B cell (primary cell): ENCODE measurements at regions of chr2 and their contacts with region 1.

Region 1: DNA sequence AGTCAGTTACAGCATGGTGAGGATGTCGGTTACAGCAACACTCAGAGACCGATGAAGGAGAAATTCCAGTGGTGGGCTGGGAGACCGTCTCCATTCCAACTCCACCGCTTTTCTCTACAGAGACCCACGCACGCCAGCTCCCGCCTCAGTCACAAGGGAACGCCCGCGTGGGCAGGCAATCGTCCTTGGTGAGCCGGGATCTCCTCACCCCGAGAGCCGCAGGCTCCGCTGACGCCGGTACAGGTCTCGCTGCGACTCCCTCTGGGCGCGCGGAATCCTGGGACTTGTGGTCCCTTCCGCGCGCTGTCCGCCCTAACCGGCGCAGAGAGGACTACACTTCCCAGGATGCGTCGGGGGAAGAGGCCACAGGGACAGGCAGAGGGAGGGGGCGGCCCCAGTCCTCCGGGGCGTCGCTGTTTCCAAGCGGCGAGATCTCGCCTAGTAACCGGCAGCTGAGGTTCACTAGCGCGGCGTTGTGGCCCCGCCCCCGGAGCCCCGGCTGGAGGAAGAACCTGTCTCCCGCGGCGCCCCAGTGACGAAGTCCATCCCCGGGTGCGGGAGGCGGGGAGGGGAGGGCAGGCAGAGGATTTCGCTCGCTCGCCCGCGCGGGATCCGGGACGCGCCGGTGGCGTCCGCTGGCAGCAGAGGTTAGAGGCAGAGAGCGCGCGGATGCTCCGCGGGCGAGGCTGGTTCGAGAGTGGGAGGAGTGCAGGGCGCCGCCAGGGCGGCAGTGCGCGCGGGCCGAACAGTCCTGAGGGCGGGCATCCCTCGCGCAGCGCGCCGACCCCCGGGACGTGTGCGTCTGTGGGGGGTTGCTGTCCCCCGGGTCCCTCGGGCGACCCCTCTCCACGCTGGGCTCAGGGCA is at the start of gene EML6:
- DNase-seq: peak; percentile 99
- ATAC-seq: peak; percentile 95
- H3K4me3 ChIP-seq: peak within 1 kb of the TSS; percentile 51 to 98 (median 79)
- H3K4me3 Mint-ChIP-seq: peak within 1 kb of the TSS; percentile 100
- H3K27ac ChIP-seq: peak within 1 kb of the TSS in 1 of 2 donors; percentile 59
- H3K27ac Mint-ChIP-seq: peak within 1 kb of the TSS; percentile 94
- H3K4me1 ChIP-seq: peaks cover 15 to 17% of the 10 kb centered on the region in 2 donors
- H3K4me1 Mint-ChIP-seq: peaks cover 37% of the 10 kb centered on the region
- H3K27me3 ChIP-seq: peaks cover 0 to 27% (median 8%) of the 10 kb centered on the region in 4 experiments
- H3K27me3 Mint-ChIP-seq: peaks cover 13% of the 10 kb centered on the region
- CTCF ChIP-seq: peak; percentile 50
- total RNA-seq, gene EML6: 47.2 and 53.7 TPM in 2 replicates

Region 2: GRCh38 chr2:53970724-53971602 is 752.4 kb before region 1 on chr2 and contains the start of gene PSME4:
- CTCF ChIA-PET with region 1: no interaction called
- POLR2A ChIA-PET with region 1: no interaction called
- intact Hi-C with region 1: loop called (anchors 1 kb)
- DNase-seq: peak; percentile 93
- ATAC-seq: peak; percentile 89
- H3K4me3 ChIP-seq: peak within 1 kb of the TSS; percentile 71 to 98 (median 95)
- H3K4me3 Mint-ChIP-seq: peak within 1 kb of the TSS; percentile 94
- H3K27ac ChIP-seq: peak within 1 kb of the TSS; percentile 71 to 89
- H3K27ac Mint-ChIP-seq: peak within 1 kb of the TSS; percentile 91
- H3K4me1 ChIP-seq: peaks cover 31 to 33% of the 10 kb centered on the region in 2 donors
- H3K4me1 Mint-ChIP-seq: peaks cover 47% of the 10 kb centered on the region
- H3K27me3 ChIP-seq: no peaks in the 10 kb centered on the region
- H3K27me3 Mint-ChIP-seq: no peaks in the 10 kb centered on the region
- CTCF ChIP-seq: no peak
- total RNA-seq, gene PSME4: 59.9 and 61.9 TPM in 2 replicates

Region 3: DNA sequence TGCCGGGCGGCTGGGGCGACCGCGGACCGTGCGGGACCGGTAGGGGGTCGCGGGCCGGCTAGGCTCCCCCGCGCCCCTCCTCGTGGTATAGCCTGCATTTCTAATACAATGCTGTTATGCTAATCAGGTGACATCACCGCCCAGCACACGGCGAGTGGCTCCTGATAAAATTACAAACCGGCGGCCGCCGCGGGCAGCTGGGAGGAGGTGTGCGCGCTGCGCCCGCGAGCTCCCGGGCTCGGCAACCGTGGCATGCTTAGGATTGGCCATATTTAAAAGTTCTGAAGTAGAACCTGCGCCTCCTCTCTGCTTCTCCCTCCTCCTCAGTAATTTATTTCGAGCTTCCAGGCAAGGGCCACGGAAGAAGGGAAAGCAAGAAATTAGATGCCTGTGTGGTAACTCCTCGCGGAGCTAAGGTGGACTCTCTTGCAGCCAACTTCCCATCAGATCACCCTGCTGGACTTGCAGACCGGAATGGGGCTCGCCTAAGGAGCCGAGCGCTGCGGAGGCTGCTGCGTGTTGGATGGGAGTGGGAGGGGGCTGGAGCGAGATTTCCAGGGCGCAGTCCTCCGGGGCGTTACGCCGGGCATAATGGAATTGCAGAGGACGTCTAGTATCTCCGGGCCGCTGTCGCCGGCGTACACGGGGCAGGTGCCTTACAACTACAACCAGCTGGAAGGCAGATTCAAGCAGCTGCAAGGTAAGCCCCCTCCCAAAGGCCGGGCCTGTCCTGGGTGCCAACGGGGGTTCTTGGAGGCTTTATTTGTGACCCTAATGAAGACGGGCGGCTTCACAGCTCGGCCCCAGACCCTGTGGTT is 165.0 kb before region 1 on chr2:
- CTCF ChIA-PET with region 1: no interaction called
- POLR2A ChIA-PET with region 1: no interaction called
- intact Hi-C with region 1: loop called (anchors 1 kb)
- DNase-seq: peak; percentile 80
- ATAC-seq: peak; percentile 65
- H3K4me3 ChIP-seq: peak overlapping the region; percentile 91 to 99 (median 97)
- H3K4me3 Mint-ChIP-seq: peak overlapping the region; percentile 94
- H3K27ac ChIP-seq: peak overlapping the region; percentile 81 to 92
- H3K27ac Mint-ChIP-seq: peak overlapping the region; percentile 90
- H3K4me1 ChIP-seq: peaks cover 30 to 35% of the 10 kb centered on the region in 2 donors
- H3K4me1 Mint-ChIP-seq: peaks cover 54% of the 10 kb centered on the region
- H3K27me3 ChIP-seq: no peaks in the 10 kb centered on the region
- H3K27me3 Mint-ChIP-seq: no peaks in the 10 kb centered on the region
- CTCF ChIP-seq: no peak

Region 4: DNA sequence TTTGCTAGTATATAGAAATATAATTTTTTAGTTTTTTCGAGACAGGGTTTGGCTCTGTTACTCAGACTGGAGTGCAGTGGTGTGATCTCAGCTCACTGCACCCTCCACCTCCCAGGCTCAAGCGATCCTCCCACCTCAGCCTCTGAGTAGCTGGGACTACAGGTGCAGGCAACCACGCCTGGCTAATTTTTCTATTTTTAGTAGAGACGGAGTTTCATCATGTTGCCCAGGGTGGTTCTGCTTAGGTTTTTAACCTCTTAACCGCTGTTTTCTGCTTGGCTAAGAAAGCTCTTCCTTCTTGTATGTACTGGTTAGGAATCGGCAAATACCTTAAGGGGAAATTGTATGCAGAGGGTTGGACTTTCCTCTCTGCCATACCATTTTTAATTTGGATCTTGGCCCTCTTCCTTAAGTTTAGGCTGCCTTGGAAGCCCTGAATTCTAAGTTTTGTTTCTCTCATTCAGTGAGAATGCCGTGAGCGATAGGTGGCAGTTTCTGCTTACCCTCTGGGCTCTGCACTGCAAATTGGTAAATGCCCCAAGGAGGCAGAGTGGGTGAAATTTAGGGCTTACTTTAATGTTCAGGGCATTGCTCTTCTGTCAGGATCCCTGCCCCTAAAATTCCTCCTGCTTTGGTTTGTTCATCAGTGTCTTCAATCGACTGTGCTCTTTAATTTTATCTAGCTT is 32.4 kb after region 1 on chr2:
- CTCF ChIA-PET with region 1: interaction called, 4 read pairs
- POLR2A ChIA-PET with region 1: no interaction called
- intact Hi-C with region 1: loop called (anchors 1 kb)
- DNase-seq: peak; percentile 61
- ATAC-seq: peak; percentile 67
- H3K4me3 ChIP-seq: peak overlapping the region in 3 of 5 experiments; percentile 7 to 52 (median 15)
- H3K4me3 Mint-ChIP-seq: peak overlapping the region; percentile 76
- H3K27ac ChIP-seq: peak overlapping the region; percentile 25 to 52
- H3K27ac Mint-ChIP-seq: peak overlapping the region; percentile 80
- H3K4me1 ChIP-seq: peaks cover 31 to 38% of the 10 kb centered on the region in 2 donors
- H3K4me1 Mint-ChIP-seq: peaks cover 45% of the 10 kb centered on the region
- H3K27me3 ChIP-seq: no peaks in the 10 kb centered on the region
- H3K27me3 Mint-ChIP-seq: no peaks in the 10 kb centered on the region
- CTCF ChIP-seq: no peak

Region 5: GRCh38 chr2:55133467-55134315 is 410.3 kb after region 1 on chr2:
- CTCF ChIA-PET with region 1: no interaction called
- POLR2A ChIA-PET with region 1: no interaction called
- intact Hi-C with region 1: loop called (anchors 5 kb)
- DNase-seq: peak; percentile 89
- ATAC-seq: peak; percentile 78
- H3K4me3 ChIP-seq: peak overlapping the region; percentile 24 to 68 (median 49)
- H3K4me3 Mint-ChIP-seq: peak overlapping the region; percentile 95
- H3K27ac ChIP-seq: peak overlapping the region; percentile 75 to 91
- H3K27ac Mint-ChIP-seq: peak overlapping the region; percentile 94
- H3K4me1 ChIP-seq: peaks cover 27 to 41% of the 10 kb centered on the region in 2 donors
- H3K4me1 Mint-ChIP-seq: peaks cover 34% of the 10 kb centered on the region
- H3K27me3 ChIP-seq: no peaks in the 10 kb centered on the region
- H3K27me3 Mint-ChIP-seq: no peaks in the 10 kb centered on the region
- CTCF ChIP-seq: no peak